ENCODE measurements at regions of chr2 and their contacts with region 1.

Region 1: GRCh38 chr2:112121682-112122254 is 16.4 kb upstream of the FBLN7 start:
- DNase-seq: peak; percentile 70 to 86 (median 78)
- H3K4me3 ChIP-seq: no peak overlapping the region
- H3K27ac ChIP-seq: no peak overlapping the region
- H3K4me1 ChIP-seq: no peaks in the 10 kb centered on the region
- H3K27me3 ChIP-seq: no peaks in the 10 kb centered on the region

Region 2: GRCh38 chr2:112110966-112111365 is 10.8 kb before region 1 on chr2:
- CTCF ChIA-PET with region 1: interaction called, 10 read pairs
- POLR2A ChIA-PET with region 1: no interaction called
- DNase-seq: no peak
- H3K4me3 ChIP-seq: no peak overlapping the region
- H3K27ac ChIP-seq: no peak overlapping the region
- H3K4me1 ChIP-seq: peaks cover 0 to 2% (median 0%) of the 10 kb centered on the region in 4 experiments
- H3K27me3 ChIP-seq: no peaks in the 10 kb centered on the region

Region 3: GRCh38 chr2:112136096-112136495 is 14.3 kb after region 1 on chr2:
- CTCF ChIA-PET with region 1: interaction called, 10 read pairs
- POLR2A ChIA-PET with region 1: no interaction called
- DNase-seq: no peak
- H3K4me3 ChIP-seq: no peak overlapping the region
- H3K27ac ChIP-seq: no peak overlapping the region
- H3K4me1 ChIP-seq: peaks cover 3 to 19% (median 13%) of the 10 kb centered on the region in 4 experiments
- H3K27me3 ChIP-seq: peaks cover 0 to 27% (median 14%) of the 10 kb centered on the region in 5 experiments

Measured in common myeloid progenitor, CD34-positive (primary cell).